H1 (cell line): ENCODE measurements at regions of chr2 and their contacts with region 1.

Region 1: GRCh38 chr2:134718023-134718816 is 580 bp downstream of the TMEM163 start:
- DNase-seq: peak in 1 of 2 experiments; percentile 77
- H3K4me3 ChIP-seq: peak overlapping the region; percentile 36 to 80 (median 69)
- H3K27ac ChIP-seq: no peak overlapping the region
- H3K4me1 ChIP-seq: peaks cover under 1 to 8% (median 3%) of the 10 kb centered on the region in 4 experiments; a peak in 6 of 7 replicates
- H3K27me3 ChIP-seq: peaks cover 19 to 48% (median 41%) of the 10 kb centered on the region in 4 experiments
- CTCF ChIP-seq: no peak
- EP300 ChIP-seq: no peak
- POLR2A ChIP-seq: no peak
- RAD21 ChIP-seq: no peak; a peak in 1 of 4 replicates

Region 2: GRCh38 chr2:134739879-134740301 is 21.7 kb after region 1 on chr2:
- CTCF ChIA-PET with region 1: interaction called, 18 read pairs
- POLR2A ChIA-PET with region 1: interaction called, 3 read pairs
- DNase-seq: no peak
- H3K4me3 ChIP-seq: no peak overlapping the region
- H3K27ac ChIP-seq: no peak overlapping the region
- H3K4me1 ChIP-seq: no peaks in the 10 kb centered on the region
- H3K27me3 ChIP-seq: no peaks in the 10 kb centered on the region
- CTCF ChIP-seq: no peak
- EP300 ChIP-seq: no peak
- POLR2A ChIP-seq: no peak
- RAD21 ChIP-seq: no peak

Region 3: GRCh38 chr2:134866549-134866981 is 148.3 kb after region 1 on chr2:
- CTCF ChIA-PET with region 1: no interaction called
- POLR2A ChIA-PET with region 1: no interaction called
- DNase-seq: no peak
- H3K4me3 ChIP-seq: no peak overlapping the region
- H3K27ac ChIP-seq: no peak overlapping the region
- H3K4me1 ChIP-seq: no peaks in the 10 kb centered on the region
- H3K27me3 ChIP-seq: no peaks in the 10 kb centered on the region
- CTCF ChIP-seq: no peak
- EP300 ChIP-seq: no peak
- POLR2A ChIP-seq: no peak
- RAD21 ChIP-seq: no peak

Region 4: DNA sequence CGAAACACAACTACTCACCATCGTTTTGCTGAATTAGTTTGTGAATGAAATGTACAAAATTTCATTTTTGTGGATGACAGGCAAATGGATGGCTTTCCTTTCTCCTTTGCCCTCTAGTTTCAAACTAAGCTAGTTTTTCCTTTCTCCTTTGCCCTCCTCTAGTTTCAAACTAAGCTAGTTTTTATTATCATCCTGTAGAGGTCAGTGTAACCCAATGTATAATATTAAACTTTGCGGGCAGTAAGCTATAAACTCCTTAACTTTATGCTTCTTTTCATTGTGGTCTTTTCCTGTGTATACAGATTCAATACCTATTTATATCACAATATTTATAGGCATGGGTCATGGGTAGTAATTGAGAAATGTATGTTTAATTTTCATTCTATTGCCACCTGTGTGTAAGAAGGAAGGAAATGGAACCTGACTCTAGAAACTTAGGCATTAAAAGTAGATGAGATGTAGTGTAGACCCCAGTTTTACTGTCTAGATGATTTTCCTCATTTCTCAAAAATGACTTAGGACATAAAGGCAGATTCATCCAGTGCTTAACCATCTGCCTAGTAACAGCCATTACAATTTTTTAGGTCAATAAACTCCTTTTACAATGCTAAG is 270.9 kb after region 1 on chr2:
- CTCF ChIA-PET with region 1: no interaction called
- POLR2A ChIA-PET with region 1: no interaction called
- DNase-seq: no peak
- H3K4me3 ChIP-seq: no peak overlapping the region
- H3K27ac ChIP-seq: no peak overlapping the region
- H3K4me1 ChIP-seq: no peaks in the 10 kb centered on the region
- H3K27me3 ChIP-seq: no peaks in the 10 kb centered on the region
- CTCF ChIP-seq: peak in 1 of 3 experiments; percentile 46; a peak in 2 of 4 replicates
- EP300 ChIP-seq: no peak
- POLR2A ChIP-seq: no peak
- RAD21 ChIP-seq: peak; percentile 59 to 61

Region 5: GRCh38 chr2:135124924-135125886 is 407.0 kb after region 1 on chr2:
- CTCF ChIA-PET with region 1: no interaction called
- POLR2A ChIA-PET with region 1: no interaction called
- DNase-seq: no peak
- H3K4me3 ChIP-seq: no peak overlapping the region
- H3K27ac ChIP-seq: no peak overlapping the region
- H3K4me1 ChIP-seq: no peaks in the 10 kb centered on the region
- H3K27me3 ChIP-seq: no peaks in the 10 kb centered on the region
- CTCF ChIP-seq: no peak
- EP300 ChIP-seq: no peak
- POLR2A ChIP-seq: no peak
- RAD21 ChIP-seq: no peak